ENCODE measurements at regions of chr16 and their contacts with region 1.

Region 1: DNA sequence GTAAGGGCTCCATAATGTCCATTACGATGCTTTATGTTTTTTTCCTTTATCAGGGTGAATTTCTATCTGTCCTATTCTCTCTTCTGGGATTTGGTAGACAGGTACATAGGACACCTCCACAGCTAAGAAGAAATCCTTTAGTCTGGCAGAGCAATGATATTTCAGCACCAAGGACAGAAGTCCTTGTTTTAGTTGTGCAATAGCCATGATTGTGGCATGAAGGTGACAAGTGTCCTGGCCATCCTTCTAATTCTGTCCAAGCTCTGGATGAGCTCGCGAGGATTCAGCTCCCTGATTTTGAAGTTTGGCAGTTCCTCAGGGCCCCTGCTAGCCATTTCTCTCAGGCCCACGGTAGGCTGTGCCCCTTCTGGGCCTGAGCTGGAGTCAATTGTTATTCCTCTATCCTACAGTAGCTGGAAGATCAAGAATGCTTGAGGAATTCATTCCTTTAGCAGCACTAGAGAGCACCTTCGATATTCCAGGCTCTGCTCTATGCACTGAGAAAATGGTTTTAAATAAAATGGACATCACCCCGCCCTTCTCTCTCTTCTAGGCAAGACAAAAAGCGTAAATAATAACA is 320.8 kb downstream of the XYLT1 start:
- DNase-seq: peak in 1 of 4 experiments; percentile 35
- ATAC-seq: no peak
- H3K4me3 ChIP-seq: no peak overlapping the region
- H3K27ac ChIP-seq: no peak overlapping the region
- H3K4me1 ChIP-seq: no peaks in the 10 kb centered on the region
- H3K27me3 ChIP-seq: no peaks in the 10 kb centered on the region
- CTCF ChIP-seq: no peak
- EP300 ChIP-seq: no peak
- POLR2A ChIP-seq: no peak
- RAD21 ChIP-seq: no peak

Region 2: DNA sequence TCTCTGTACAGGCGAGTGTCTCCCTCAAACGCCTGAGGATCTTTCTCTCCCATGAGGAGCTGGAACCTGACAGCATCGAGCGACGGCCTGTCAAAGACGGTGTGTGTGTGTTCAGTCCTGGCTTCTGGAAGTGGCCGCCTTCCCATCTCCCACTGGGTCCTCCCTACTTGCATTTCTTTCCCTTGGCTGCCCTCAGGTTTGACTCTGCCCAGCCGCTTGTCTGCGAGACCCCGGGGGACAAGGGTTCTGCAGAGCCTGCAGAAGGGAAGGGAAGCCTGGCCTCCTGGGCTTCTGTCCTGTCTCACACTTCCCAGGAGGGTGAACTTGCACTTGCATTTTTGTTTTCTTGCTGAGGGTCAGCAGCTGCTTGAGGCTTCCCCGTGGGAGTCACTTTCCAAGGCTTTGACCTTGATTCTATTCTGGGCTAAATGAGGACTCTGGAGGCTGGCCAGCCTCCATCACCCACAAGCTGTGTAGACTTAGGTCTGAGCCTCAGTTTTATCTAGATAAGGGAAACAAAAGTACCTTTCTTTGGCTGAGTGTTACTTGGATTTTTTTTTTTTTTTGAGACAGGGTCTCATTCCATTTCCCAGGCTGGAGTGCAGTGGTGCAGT is 1078.3 kb before region 1 on chr16:
- CTCF ChIA-PET with region 1: no interaction called
- POLR2A ChIA-PET with region 1: no interaction called
- in situ Hi-C with region 1: no loop called
- intact Hi-C with region 1: no loop called
- DNase-seq: peak in 1 of 4 experiments; percentile 7
- ATAC-seq: no peak
- H3K4me3 ChIP-seq: no peak overlapping the region
- H3K27ac ChIP-seq: no peak overlapping the region
- H3K4me1 ChIP-seq: peaks cover 0 to 7% of the 10 kb centered on the region in 2 experiments; a peak in 2 of 5 replicates
- H3K27me3 ChIP-seq: no peaks in the 10 kb centered on the region
- CTCF ChIP-seq: no peak
- EP300 ChIP-seq: no peak
- POLR2A ChIP-seq: no peak
- RAD21 ChIP-seq: no peak

Region 3: DNA sequence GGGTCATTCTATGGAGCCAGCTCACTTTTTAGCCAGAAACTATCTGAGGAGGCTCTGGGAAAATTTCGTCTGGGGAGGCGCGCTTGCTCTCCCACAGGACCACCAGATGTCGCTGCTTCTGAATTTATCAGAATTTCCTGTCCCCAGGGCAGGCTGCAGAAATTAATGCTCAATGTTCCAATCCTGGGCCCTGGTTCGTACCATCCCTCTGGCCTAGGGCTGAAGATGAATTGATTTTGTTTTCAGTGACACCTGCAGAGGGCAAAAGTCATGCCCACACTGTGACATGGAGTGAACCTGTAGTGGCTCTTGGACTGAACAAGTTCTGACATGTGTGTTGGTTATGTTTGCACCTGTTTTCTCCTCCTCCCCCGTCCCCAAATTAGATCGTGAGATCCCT is 288.4 kb before region 1 on chr16:
- CTCF ChIA-PET with region 1: no interaction called
- POLR2A ChIA-PET with region 1: no interaction called
- in situ Hi-C with region 1: no loop called
- intact Hi-C with region 1: loop called (anchors 10 kb)
- DNase-seq: peak; percentile 38 to 66 (median 48)
- ATAC-seq: peak; percentile 79
- H3K4me3 ChIP-seq: no peak overlapping the region
- H3K27ac ChIP-seq: no peak overlapping the region
- H3K4me1 ChIP-seq: 0 out of 5 replicates have a peak, but pooled peaks cover 0 to 5% of the 10 kb centered on the region in 2 experiments
- H3K27me3 ChIP-seq: no peaks in the 10 kb centered on the region
- CTCF ChIP-seq: peak; percentile 79 to 84 (median 83)
- EP300 ChIP-seq: no peak
- POLR2A ChIP-seq: no peak
- RAD21 ChIP-seq: peak; percentile 63 to 79

Region 4: DNA sequence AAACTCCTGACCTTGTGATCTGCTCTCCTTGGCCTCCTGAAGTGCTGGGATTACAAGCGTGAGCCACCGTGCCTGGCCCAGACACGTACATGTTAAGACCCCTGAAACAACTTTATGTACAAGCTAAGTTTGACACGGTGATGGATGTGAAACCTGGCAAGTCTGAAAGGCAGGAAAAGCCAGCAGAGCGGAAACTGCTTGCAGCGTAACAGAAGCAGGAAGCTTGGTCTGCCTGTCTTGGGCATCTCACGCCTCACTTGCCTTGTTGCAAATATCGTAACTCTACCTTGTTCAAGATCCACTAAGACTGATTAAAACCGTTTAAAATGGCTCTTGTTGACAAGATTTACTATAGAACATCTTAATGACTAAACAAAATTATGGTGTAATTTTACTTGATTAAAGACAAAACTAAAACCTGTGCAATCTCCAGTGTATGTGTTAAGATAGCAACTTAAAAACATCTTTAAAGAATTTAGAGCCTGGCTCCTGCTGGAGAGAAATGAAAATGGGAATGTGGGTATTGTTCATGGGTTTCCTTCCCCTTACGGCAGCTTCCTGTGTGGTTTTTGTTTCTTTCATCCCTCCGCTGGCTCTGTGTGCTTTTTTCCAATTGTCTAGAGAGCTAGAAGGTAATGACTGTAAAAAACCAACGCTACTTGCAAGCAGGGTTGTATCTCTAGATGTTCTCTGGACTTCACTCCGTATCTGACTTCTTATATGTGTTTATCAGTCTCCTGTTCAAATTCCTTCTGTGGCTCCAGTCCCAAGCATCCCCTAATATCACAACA is 156.8 kb before region 1 on chr16:
- CTCF ChIA-PET with region 1: no interaction called
- POLR2A ChIA-PET with region 1: no interaction called
- in situ Hi-C with region 1: no loop called
- intact Hi-C with region 1: loop called (anchors 10 kb)
- DNase-seq: no peak
- ATAC-seq: no peak
- H3K4me3 ChIP-seq: no peak overlapping the region
- H3K27ac ChIP-seq: no peak overlapping the region
- H3K4me1 ChIP-seq: no peaks in the 10 kb centered on the region; a peak in 1 of 5 replicates
- H3K27me3 ChIP-seq: peaks cover 14 to 42% of the 10 kb centered on the region in 2 experiments
- CTCF ChIP-seq: no peak
- EP300 ChIP-seq: no peak
- POLR2A ChIP-seq: no peak
- RAD21 ChIP-seq: no peak

Region 5: DNA sequence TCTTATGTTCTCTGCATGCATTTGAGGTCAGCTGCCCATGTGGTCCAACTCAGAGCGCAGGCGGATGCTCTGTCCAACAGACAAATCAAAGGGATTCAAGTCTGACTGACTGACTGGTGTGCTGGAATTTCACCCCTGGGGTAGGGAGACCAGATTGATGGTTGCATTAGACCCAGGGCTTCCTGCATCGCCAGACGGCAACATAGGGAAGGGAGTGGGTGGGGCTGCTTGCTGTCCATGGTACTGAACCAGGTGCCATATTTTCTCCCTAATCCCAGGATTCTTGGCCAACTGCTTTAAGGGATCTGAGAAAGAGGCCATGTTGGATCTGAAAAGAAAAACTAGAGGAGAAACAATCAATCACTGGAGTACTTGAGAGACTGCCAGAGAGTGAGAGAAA is 11.2 kb before region 1 on chr16:
- CTCF ChIA-PET with region 1: no interaction called
- POLR2A ChIA-PET with region 1: interaction called, 12 read pairs
- in situ Hi-C with region 1: no loop called
- intact Hi-C with region 1: no loop called
- DNase-seq: peak; percentile 27 to 65 (median 56)
- ATAC-seq: peak; percentile 58; the same call in 1 of the 3 replicates
- H3K4me3 ChIP-seq: no peak overlapping the region
- H3K27ac ChIP-seq: no peak overlapping the region
- H3K4me1 ChIP-seq: no peaks in the 10 kb centered on the region
- H3K27me3 ChIP-seq: no peaks in the 10 kb centered on the region
- CTCF ChIP-seq: no peak
- EP300 ChIP-seq: no peak
- POLR2A ChIP-seq: no peak
- RAD21 ChIP-seq: no peak

Measured in K562 (cell line).